ENCODE measurements at regions of chr15 and their contacts with region 1.

Region 1: GRCh38 chr15:99733268-99734039 is at the start of gene LYSMD4:
- DNase-seq: peak; percentile 99
- H3K4me3 Mint-ChIP-seq: peak within 1 kb of the TSS; percentile 75
- H3K27ac Mint-ChIP-seq: peak within 1 kb of the TSS; percentile 92
- H3K4me1 Mint-ChIP-seq: peaks cover 11% of the 10 kb centered on the region
- H3K27me3 Mint-ChIP-seq: no peaks in the 10 kb centered on the region
- total RNA-seq, gene LYSMD4: 5.2 to 7.6 TPM

Region 2: GRCh38 chr15:99009741-99010370 is 723.6 kb before region 1 on chr15:
- CTCF ChIA-PET with region 1: no interaction called
- POLR2A ChIA-PET with region 1: no interaction called
- intact Hi-C with region 1: no loop called
- DNase-seq: no peak
- H3K4me3 Mint-ChIP-seq: no peak overlapping the region
- H3K27ac Mint-ChIP-seq: no peak overlapping the region
- H3K4me1 Mint-ChIP-seq: peaks cover 2% of the 10 kb centered on the region
- H3K27me3 Mint-ChIP-seq: peaks cover 1% of the 10 kb centered on the region

Region 3: GRCh38 chr15:99719096-99719541 is 14.3 kb before region 1 on chr15:
- CTCF ChIA-PET with region 1: no interaction called
- POLR2A ChIA-PET with region 1: interaction called, 11 read pairs
- intact Hi-C with region 1: loop called (anchors 1 kb)
- DNase-seq: no peak
- H3K4me3 Mint-ChIP-seq: no peak overlapping the region
- H3K27ac Mint-ChIP-seq: no peak overlapping the region
- H3K4me1 Mint-ChIP-seq: peaks cover 40% of the 10 kb centered on the region
- H3K27me3 Mint-ChIP-seq: no peaks in the 10 kb centered on the region

Region 4: DNA sequence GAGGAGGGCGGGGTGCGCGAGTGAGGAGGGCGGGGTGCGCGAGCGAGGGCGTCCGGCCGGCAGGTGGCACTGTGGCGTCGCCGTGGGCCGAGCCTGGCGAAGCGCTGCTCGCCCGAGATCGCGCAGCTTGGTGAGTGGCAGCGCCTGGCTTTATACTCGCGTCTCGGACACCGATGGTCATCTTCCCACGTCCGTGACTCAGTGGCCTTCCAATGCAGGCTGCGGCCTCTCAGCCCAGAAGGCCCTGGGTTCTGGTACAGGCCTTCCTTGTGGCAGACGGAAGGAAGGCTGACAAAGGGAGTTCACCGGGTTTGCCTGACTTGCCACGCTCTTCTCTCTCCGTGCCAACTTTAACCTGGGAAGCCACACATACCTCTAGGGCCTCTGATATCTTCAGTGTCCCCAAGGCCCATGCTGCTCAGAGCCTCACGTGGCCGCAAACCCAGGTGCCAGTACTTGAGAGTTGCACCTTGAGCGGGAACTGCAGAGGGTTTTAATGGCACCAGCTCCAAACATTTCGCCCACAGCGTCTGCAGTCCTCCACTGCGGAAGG is 195.1 kb after region 1 on chr15:
- CTCF ChIA-PET with region 1: no interaction called
- POLR2A ChIA-PET with region 1: no interaction called
- intact Hi-C with region 1: loop called (anchors 2 kb)
- DNase-seq: peak; percentile 87
- H3K4me3 Mint-ChIP-seq: peak overlapping the region; percentile 77
- H3K27ac Mint-ChIP-seq: peak overlapping the region; percentile 42
- H3K4me1 Mint-ChIP-seq: peaks cover 8% of the 10 kb centered on the region
- H3K27me3 Mint-ChIP-seq: no peaks in the 10 kb centered on the region

Measured in activated CD4-positive, alpha-beta memory T cell treated with anti-CD3 and anti-CD28 coated beads for 36 hours (primary cell).